ENCODE measurements at regions of chr22 and their contacts with region 1.

Region 1: DNA sequence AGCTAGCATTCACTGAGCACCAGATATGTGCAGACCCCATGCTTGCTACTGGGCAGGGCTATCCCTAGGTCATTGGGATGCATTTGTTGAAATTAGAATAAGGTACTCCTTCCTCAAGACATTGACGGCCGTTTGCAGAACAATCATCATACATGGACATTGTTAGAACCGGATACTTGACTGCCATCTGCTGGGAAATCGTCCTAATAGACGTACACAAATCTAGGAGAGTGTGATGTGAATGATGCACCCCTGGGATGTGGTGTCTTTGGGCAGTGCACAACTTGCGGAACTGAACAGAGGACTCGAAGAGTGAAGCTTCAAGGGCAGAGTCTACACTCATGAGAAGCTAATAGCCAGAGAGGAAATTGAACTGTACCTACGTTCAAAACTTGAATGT is 35.9 kb downstream of the MYO18B start:
- DNase-seq: no peak
- ATAC-seq: no peak

Region 2: GRCh38 chr22:25702040-25702439 is 75.8 kb before region 1 on chr22:
- intact Hi-C with region 1: loop called (anchors 10 kb)
- DNase-seq: no peak
- ATAC-seq: peak; percentile 73

Region 3: DNA sequence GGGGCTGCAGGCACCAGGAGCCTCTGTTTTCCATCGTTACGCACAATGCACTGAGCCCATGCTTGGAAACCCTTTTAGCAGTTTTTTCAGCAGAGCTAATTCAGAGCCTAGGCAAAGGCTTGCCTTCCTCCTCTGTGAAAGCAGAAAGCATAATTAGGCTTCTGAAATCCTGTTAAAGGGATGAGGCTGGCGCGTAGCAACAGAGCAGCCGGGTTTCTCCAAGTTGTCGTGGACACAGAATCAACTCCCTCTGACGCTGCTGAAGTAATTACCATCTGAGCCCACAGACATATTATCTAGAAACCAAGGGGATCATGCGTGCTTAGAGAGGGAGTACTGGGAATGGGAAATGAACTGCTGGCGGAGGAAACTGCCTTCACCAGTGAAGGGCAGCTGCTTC is 49.5 kb after region 1 on chr22:
- intact Hi-C with region 1: no loop called
- DNase-seq: no peak
- ATAC-seq: no peak